Activated CD4-positive, alpha-beta T cell treated with anti-CD3 and anti-CD28 coated beads, Interleukin-2, amount 10 ng/mL, durations not matched to agents 7 days and 5 days (primary cell): ENCODE measurements at regions of chr1 and their contacts with region 1.

Region 1: DNA sequence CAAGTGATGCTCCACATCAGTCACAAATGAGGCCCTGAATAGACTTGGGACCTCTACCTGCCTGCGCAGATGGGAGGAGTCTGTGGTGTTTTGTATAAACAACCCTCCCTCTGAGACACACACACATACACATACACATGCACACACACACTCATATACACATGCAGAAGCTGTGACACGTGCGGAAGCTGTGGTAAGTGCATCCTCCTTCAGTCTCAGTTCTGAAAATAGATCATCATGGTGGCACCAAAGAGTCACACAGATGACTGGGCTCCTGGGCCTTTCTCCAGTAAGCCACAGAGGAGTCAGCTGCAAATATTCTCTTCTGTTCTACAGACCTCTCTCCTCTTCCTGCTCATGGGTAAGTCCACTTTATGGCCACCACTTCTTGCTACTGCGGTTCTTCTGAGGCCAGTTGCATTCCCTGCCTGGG is at the start of gene LY9:
- DNase-seq: peak; percentile 91
- H3K4me3 Mint-ChIP-seq: peak within 1 kb of the TSS; percentile 86
- H3K27ac Mint-ChIP-seq: peak within 1 kb of the TSS; percentile 92
- H3K4me1 Mint-ChIP-seq: peaks cover 61% of the 10 kb centered on the region
- H3K27me3 Mint-ChIP-seq: no peaks in the 10 kb centered on the region
- total RNA-seq, gene LY9: 45.9 to 49.0 TPM

Region 2: DNA sequence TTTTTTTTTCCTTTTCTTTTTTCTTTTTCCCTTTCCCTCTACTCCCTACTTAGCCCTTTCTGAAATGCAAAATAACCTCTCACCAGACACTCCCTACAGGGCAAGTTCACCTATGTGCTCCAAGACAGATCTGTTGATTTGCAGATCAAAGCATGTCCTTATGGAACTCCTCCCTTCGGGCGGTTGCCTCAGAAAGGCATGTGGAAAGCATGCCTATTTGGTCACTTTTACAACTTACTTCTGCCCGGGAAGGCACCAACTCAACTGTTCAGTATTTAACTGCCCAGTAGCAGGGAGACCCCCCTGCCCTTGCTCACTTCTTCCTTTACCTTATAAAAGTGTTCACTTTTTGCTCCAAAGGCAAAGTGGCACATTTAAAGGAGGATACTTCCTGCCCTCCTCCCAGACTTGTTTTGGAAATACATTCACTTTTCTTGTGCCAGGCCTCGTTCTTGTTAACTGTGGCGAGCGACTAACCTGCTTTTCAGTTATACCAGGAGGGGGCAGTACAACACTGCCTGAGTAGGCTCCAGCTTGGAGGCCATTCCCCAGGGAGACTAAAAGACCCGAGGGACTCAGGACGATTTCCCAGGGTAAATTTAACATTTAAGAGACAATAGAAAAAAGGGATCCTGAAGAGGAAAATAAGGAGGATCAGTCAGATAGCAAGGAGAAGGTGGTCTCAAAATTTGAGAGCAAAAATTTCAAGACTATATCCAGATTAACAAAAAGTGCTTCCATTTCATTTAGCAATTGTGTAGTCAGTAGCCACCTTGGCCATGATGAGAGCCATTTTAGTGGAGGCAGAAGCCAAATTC is 69.3 kb before region 1 on chr1:
- CTCF ChIA-PET with region 1: interaction called, 13 read pairs
- POLR2A ChIA-PET with region 1: no interaction called
- DNase-seq: peak; percentile 79
- H3K4me3 Mint-ChIP-seq: no peak overlapping the region
- H3K27ac Mint-ChIP-seq: no peak overlapping the region
- H3K4me1 Mint-ChIP-seq: peaks cover 24% of the 10 kb centered on the region
- H3K27me3 Mint-ChIP-seq: no peaks in the 10 kb centered on the region

Region 3: DNA sequence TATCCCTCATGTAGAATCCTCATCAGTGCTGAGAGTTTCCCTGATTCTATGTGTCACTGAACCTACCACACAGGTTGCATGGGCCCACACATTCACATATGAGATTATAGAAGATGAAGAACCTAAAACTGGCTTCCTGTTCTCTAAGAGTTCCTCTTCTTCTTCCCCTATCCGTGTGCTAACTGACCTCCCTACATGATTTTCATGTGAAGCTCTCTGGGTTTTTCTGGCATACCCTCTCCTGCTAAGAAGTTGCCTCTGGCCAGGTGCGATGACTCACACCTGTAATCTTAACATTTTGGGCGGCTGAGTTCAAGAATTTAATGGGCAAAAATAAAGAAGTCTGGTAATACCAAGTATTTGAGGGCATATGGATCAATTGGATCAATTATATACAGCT is 72.2 kb after region 1 on chr1:
- CTCF ChIA-PET with region 1: no interaction called
- POLR2A ChIA-PET with region 1: no interaction called
- DNase-seq: no peak
- H3K4me3 Mint-ChIP-seq: no peak overlapping the region
- H3K27ac Mint-ChIP-seq: no peak overlapping the region
- H3K4me1 Mint-ChIP-seq: peaks cover 9% of the 10 kb centered on the region
- H3K27me3 Mint-ChIP-seq: peaks cover under 1% of the 10 kb centered on the region